A549 (cell line): ENCODE measurements at regions of chr11 and their contacts with region 1.

Region 1: GRCh38 chr11:10792398-10792975 is 16.2 kb downstream of the EIF4G2 start:
- DNase-seq: peak; percentile 85 to 86
- ATAC-seq: peak; percentile 83 to 94
- H3K4me3 ChIP-seq: no peak overlapping the region
- H3K27ac ChIP-seq: peak overlapping the region; percentile 16 to 68; a peak in 4 of 6 replicates
- H3K4me1 ChIP-seq: peaks cover 16% of the 10 kb centered on the region
- CTCF ChIP-seq: peak; percentile 90
- EP300 ChIP-seq: no peak
- POLR2A ChIP-seq: no peak
- RAD21 ChIP-seq: peak; percentile 97 to 98

Region 2: DNA sequence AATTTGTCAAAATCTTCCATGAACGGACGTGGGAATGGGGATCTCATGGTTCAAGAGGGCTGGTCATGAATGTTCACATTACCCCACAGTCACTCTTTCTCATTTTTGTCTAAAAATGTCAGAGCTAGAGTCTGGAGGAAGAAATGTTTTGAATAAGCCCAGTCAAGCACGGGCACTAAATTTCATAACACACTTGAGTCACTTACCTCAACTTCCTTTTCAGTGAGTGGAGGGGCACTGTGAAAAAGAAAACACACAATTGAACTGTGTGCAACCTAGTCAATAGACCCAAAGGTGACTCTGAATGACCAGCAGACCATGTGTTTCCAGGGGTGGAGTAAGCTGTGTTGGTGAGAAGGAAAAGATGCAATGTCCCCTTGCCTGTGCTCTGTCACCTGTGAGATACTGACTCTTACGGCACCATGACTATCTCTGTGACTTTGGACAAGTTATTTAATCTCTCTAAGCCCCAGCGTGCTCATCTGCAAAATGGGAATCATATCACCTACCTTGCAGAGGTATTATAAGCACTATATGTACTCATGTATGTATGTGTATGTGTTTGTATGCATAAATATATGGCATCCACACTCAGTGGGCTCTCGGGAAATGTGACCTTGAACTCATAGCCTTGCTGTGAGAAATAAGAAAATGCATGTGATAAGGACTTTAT is 185.8 kb before region 1 on chr11:
- CTCF ChIA-PET with region 1: no interaction called
- POLR2A ChIA-PET with region 1: no interaction called
- DNase-seq: no peak
- ATAC-seq: no peak
- H3K4me3 ChIP-seq: no peak overlapping the region
- H3K27ac ChIP-seq: no peak overlapping the region
- H3K4me1 ChIP-seq: no peaks in the 10 kb centered on the region
- CTCF ChIP-seq: no peak
- EP300 ChIP-seq: no peak
- POLR2A ChIP-seq: no peak
- RAD21 ChIP-seq: no peak

Region 3: GRCh38 chr11:10623797-10624761 is 168.4 kb before region 1 on chr11:
- CTCF ChIA-PET with region 1: no interaction called
- POLR2A ChIA-PET with region 1: no interaction called
- DNase-seq: peak; percentile 46 to 57
- ATAC-seq: peak; percentile 48 to 84; a peak in 3 of 6 replicates
- H3K4me3 ChIP-seq: no peak overlapping the region
- H3K27ac ChIP-seq: peak overlapping the region in 1 of 2 experiments; percentile 52; a peak in 2 of 6 replicates
- H3K4me1 ChIP-seq: no peaks in the 10 kb centered on the region
- CTCF ChIP-seq: peak; percentile 56
- EP300 ChIP-seq: no peak
- POLR2A ChIP-seq: no peak
- RAD21 ChIP-seq: peak; percentile 79 to 82

Region 4: GRCh38 chr11:10803676-10804075 is 11.2 kb after region 1 on chr11:
- CTCF ChIA-PET with region 1: interaction called, 59 read pairs
- POLR2A ChIA-PET with region 1: interaction called, 43 read pairs
- DNase-seq: no peak
- ATAC-seq: no peak
- H3K4me3 ChIP-seq: no peak overlapping the region
- H3K27ac ChIP-seq: no peak overlapping the region
- H3K4me1 ChIP-seq: peaks cover 59% of the 10 kb centered on the region
- CTCF ChIP-seq: no peak
- EP300 ChIP-seq: no peak
- POLR2A ChIP-seq: no peak
- RAD21 ChIP-seq: no peak

Region 5: GRCh38 chr11:10857709-10858438 is 65.4 kb after region 1 on chr11 and contains the start of gene ZBED5:
- CTCF ChIA-PET with region 1: interaction called, 12 read pairs
- POLR2A ChIA-PET with region 1: interaction called, 6 read pairs
- DNase-seq: peak; percentile 87 to 98
- ATAC-seq: peak; percentile 96
- H3K4me3 ChIP-seq: peak within 1 kb of the TSS; percentile 91
- H3K27ac ChIP-seq: peak within 1 kb of the TSS; percentile 95 to 98
- H3K4me1 ChIP-seq: peaks cover 36% of the 10 kb centered on the region
- CTCF ChIP-seq: no peak
- EP300 ChIP-seq: no peak
- POLR2A ChIP-seq: peak; percentile 76
- RAD21 ChIP-seq: peak; percentile 12; a peak in 1 of 5 replicates
- polyA plus RNA-seq, gene ZBED5: 132 and 142 TPM in 2 replicates

Region 6: DNA sequence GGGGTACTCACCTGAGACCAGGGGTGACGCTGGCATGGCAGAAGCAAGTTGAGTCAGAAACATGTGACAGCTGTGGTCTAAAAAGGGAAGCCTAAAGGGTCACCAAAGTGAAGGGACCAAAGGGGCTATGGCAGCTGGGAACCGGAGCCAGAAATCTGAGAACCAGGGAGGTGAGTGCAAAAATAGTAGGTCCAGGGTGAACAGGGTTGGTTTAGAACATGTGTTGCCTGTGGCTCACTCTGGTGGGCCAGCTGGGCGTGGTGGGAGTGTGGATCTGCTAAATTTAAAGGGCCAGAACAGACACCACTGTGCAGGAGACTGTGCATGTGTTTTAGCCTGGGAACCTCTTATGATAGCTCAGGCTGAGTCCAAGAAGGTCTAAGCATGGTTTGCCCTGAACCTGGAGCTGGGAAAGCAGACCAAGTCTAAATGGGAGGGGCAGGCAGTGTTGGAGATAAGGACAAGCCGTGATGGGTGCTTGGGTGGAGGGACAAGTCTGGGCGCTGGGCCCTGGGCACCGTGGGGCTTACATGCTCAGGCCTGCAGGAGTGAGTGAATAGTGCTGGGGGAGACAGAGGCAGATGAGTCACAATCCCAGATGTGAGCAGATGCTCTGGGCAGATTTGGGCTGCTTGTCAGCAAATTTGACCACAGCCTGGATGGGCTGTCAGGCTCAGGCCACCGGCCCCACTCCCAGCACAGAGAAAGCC is 106.8 kb after region 1 on chr11:
- CTCF ChIA-PET with region 1: interaction called, 25 read pairs
- POLR2A ChIA-PET with region 1: interaction called, 4 read pairs
- DNase-seq: no peak
- ATAC-seq: peak; percentile 67 to 74
- H3K4me3 ChIP-seq: no peak overlapping the region
- H3K27ac ChIP-seq: peak overlapping the region; percentile 87 to 93
- H3K4me1 ChIP-seq: peaks cover 62% of the 10 kb centered on the region
- CTCF ChIP-seq: no peak
- EP300 ChIP-seq: no peak
- POLR2A ChIP-seq: no peak
- RAD21 ChIP-seq: peak in 1 of 2 experiments; percentile 12; a peak in 3 of 5 replicates

Region 7: GRCh38 chr11:10925144-10925926 is 132.8 kb after region 1 on chr11:
- CTCF ChIA-PET with region 1: interaction called, 78 read pairs
- POLR2A ChIA-PET with region 1: no interaction called
- DNase-seq: peak in 1 of 2 experiments; percentile 48
- ATAC-seq: peak in 1 of 2 experiments; percentile 20; a peak in 3 of 6 replicates
- H3K4me3 ChIP-seq: no peak overlapping the region
- H3K27ac ChIP-seq: peak overlapping the region; percentile 59 to 98; a peak in 5 of 6 replicates
- H3K4me1 ChIP-seq: peaks cover 59% of the 10 kb centered on the region
- CTCF ChIP-seq: no peak
- EP300 ChIP-seq: peak; percentile 16 to 69; a peak in 2 of 5 replicates
- POLR2A ChIP-seq: no peak
- RAD21 ChIP-seq: no peak

Region 8: DNA sequence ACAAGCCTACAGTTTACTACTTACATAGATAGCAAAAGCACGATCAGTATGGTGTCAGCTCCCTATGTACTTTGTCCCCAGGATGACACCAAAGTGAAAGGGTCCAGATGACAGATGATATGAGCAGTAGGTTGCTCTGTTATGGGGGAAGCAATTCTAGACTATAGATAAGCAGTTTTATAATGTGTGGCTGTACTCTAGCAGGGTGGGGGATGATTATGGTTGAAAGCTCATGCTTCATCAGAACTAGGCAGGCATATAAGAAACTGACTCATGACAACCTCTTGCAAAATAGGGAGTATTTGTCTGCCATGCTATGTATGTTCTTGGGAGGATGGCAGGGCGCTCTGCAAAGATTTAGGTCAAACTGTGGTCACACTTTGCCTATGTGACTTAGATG is 223.6 kb after region 1 on chr11:
- CTCF ChIA-PET with region 1: interaction called, 42 read pairs
- POLR2A ChIA-PET with region 1: no interaction called
- DNase-seq: no peak
- ATAC-seq: no peak
- H3K4me3 ChIP-seq: no peak overlapping the region
- H3K27ac ChIP-seq: no peak overlapping the region; a peak in 1 of 6 replicates
- H3K4me1 ChIP-seq: peaks cover under 1% of the 10 kb centered on the region; the same call in 1 of the 3 replicates
- CTCF ChIP-seq: no peak
- EP300 ChIP-seq: no peak
- POLR2A ChIP-seq: no peak
- RAD21 ChIP-seq: no peak

Region 9: GRCh38 chr11:11036848-11037732 is 244.6 kb after region 1 on chr11:
- CTCF ChIA-PET with region 1: interaction called, 12 read pairs
- POLR2A ChIA-PET with region 1: no interaction called
- DNase-seq: peak; percentile 31 to 80
- ATAC-seq: peak; percentile 83 to 96; a peak in 4 of 6 replicates
- H3K4me3 ChIP-seq: no peak overlapping the region
- H3K27ac ChIP-seq: no peak overlapping the region
- H3K4me1 ChIP-seq: no peaks in the 10 kb centered on the region
- CTCF ChIP-seq: peak; percentile 75
- EP300 ChIP-seq: no peak
- POLR2A ChIP-seq: no peak
- RAD21 ChIP-seq: peak; percentile 76 to 79